AG04449 (cell line): ENCODE measurements at regions of chr2 and their contacts with region 1.

Region 1: DNA sequence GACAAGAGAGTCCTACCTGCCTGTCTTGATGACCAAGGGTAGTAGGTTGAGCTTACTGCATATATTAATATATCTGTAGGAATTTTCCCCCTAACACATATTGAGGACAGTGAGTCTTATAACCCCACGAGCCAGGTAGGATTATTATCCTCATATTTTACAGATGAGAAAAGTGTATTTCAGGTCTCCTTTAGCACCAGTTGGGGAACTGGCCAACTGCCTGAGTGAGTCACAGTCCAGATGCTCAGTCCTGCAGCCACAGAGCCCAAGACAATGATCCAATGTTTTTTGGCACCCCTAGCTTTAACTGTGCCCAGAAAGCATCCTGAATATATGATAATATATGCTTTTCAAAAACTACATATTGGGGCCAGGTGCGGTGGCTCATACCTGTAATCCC is 30.8 kb upstream of the GLS start:
- DNase-seq: no peak
- H3K4me3 ChIP-seq: no peak overlapping the region
- CTCF ChIP-seq: no peak

Region 2: GRCh38 chr2:190468814-190469569 is 380.8 kb before region 1 on chr2:
- CTCF ChIA-PET with region 1: no interaction called
- POLR2A ChIA-PET with region 1: no interaction called
- DNase-seq: peak; percentile 94
- H3K4me3 ChIP-seq: no peak overlapping the region
- CTCF ChIP-seq: no peak

Region 3: GRCh38 chr2:190497428-190497827 is 352.3 kb before region 1 on chr2:
- CTCF ChIA-PET with region 1: no interaction called
- POLR2A ChIA-PET with region 1: no interaction called
- DNase-seq: no peak
- H3K4me3 ChIP-seq: no peak overlapping the region
- CTCF ChIP-seq: no peak

Region 4: DNA sequence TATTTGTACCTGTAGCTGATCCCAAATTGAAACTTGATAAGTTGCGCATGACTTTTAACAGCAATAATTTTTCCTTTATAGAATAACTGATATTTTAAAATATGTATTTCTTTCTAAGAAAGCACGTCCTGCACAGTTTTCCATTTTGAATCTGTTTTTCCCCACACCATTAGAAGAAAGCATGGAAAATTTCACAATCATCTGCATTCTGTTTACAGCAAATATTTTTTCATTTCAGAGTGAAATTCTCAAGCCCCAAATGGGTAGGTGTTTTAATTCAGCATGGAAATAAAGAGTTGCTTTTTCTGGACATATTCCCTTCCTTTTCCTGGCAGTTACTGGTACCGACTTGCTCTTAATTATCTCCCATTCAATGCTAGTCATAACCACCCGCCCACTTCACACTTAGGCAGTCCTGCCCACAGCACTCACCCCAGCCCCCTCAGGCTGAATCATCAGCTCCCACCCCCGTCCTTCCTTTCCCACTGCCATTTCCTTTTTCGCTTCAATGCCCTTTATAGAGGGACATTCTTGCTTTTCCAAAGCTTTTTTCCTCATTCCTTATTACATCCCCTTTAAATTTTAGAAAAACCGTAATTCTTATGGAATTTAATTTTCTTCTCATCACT is 58.3 kb before region 1 on chr2:
- CTCF ChIA-PET with region 1: interaction called, 13 read pairs
- POLR2A ChIA-PET with region 1: no interaction called
- DNase-seq: peak; percentile 12
- H3K4me3 ChIP-seq: no peak overlapping the region
- CTCF ChIP-seq: no peak

Region 5: DNA sequence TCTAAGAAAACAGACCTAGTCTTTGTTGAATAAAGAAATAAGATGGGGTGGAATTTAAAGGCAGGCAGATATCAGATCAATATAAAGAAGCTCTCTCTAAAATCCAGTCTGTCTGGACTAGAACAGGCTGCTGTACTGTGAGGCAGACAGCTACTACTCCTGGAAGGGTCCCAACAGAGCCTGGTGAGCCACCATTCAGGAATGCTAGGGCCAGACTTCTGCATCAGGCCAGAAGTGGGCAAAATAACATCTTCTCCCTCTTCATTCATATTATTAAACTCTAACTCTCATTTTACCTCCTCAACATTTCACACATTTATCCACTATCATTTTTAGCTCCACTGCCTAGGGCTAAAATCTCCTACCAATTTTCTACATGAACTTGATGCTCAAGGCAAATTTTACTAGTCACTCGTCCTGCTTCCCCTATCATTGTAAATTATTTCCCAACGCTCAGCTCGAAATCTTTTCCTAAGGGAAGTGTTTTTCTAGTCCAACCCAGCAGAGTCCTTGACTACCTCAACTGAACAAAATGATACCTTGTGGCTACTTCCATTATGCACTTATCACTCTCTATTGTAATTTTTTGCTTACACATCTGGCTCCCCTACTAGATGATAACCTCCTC is 14.4 kb before region 1 on chr2:
- CTCF ChIA-PET with region 1: interaction called, 55 read pairs
- POLR2A ChIA-PET with region 1: interaction called, 3 read pairs
- DNase-seq: peak; percentile 59
- H3K4me3 ChIP-seq: no peak overlapping the region
- CTCF ChIP-seq: no peak

Region 6: DNA sequence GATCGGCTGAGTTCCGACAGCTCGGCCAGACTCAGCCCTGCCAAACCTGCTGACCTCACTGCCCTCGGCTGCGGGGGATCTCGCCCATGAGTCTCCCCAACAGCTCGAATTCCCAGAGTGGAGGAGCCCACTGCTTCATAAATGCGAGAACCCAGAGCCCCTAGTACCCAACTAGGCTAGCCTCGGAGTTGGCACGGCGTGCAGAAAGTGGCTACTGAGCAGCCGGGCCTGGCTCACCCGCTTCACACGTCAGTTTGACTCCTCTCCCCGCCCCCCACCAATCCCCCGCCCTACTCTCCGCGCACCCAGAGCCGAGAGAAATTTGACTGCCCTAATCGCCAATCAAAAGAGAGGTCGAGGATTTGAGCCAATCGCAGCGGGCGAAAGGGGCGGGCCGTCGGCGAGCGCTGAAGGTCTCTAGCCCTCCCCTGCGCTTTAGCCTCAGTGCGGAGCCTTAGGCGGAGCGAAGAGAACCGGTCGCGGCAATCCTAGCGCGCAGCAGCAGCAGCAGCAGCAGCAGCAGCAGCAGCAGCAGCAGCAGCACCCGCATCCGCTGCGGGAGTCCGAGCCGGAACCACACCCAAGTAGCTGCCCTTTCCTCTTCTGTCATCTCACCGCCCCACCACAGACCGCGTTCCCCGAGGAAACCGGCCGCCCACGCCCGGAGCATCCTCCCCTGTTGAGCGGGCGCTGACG is 30.8 kb after region 1 on chr2 and contains the start of gene GLS:
- CTCF ChIA-PET with region 1: interaction called, 14 read pairs
- POLR2A ChIA-PET with region 1: interaction called, 12 read pairs
- DNase-seq: no peak
- H3K4me3 ChIP-seq: peak within 1 kb of the TSS; percentile 70
- CTCF ChIP-seq: no peak

Region 7: GRCh38 chr2:190947711-190948251 is 98.0 kb after region 1 on chr2:
- CTCF ChIA-PET with region 1: interaction called, 15 read pairs
- POLR2A ChIA-PET with region 1: no interaction called
- DNase-seq: no peak
- H3K4me3 ChIP-seq: no peak overlapping the region
- CTCF ChIP-seq: no peak